ENCODE measurements at regions of chr2 and their contacts with region 1.

Region 1: DNA sequence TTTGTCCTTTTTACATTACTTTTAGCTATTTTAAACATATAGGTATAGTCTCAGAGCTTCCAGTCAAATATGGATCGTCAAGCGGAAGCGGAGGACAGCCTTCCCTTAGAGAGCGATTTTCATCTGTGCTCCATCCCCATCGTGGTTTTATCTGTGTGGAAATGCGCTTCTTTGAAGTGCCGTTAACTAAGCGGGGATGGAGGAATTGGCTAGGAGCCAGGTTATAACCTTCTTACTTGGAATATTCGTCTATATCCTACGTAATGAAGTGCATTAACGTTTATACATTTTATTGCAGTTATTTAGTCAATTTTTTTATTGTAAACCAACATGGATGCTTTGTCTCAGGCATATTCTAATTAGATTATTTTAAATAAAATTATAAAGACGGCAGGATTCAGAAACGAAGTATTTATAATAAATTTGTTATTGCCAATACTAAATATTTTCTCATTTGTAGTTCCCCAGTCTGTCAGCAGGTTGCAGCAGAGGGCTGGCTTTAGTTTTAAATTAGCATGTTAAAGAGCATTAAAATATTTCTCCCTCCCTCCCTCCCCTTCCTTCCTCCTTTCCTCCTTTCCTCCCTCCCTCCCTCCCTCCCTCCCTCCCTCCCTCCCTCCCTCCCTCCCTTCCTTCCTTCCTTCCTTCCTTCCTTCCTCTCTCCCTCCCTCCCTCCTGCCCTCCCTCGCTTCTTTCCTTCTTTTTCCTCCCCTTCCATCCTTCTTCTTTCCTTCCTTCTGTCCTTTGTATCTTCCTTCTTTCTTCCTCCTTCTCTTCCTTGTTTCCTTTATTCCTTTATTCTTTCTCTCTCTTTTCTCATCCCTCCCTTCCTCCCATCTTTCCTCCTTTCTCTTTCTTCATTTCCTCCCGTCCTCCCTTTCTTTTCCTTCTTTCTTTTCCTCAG is 80.6 kb upstream of the DOCK10 start:
- DNase-seq: no peak
- ATAC-seq: no peak

Region 2: GRCh38 chr2:225650041-225650440 is 527.2 kb after region 1 on chr2:
- intact Hi-C with region 1: loop called in 1 of 2 experiments (anchors 10 kb)
- DNase-seq: no peak
- ATAC-seq: no peak

Measured in left cardiac atrium (tissue), 4 donors.